ENCODE measurements at regions of chr11 and their contacts with region 1.

Region 1: GRCh38 chr11:102287964-102288724 is 29.1 kb upstream of the BIRC3 start:
- DNase-seq: peak in 3 of 9 experiments; percentile 34 to 85 (median 76)
- ATAC-seq: peak; percentile 89
- H3K4me3 ChIP-seq: no peak overlapping the region
- H3K4me3 Mint-ChIP-seq: peak overlapping the region; percentile 35
- H3K27ac ChIP-seq: no peak overlapping the region
- H3K27ac Mint-ChIP-seq: no peak overlapping the region
- H3K4me1 ChIP-seq: no peaks in the 10 kb centered on the region
- H3K4me1 Mint-ChIP-seq: peaks cover 12% of the 10 kb centered on the region
- H3K27me3 ChIP-seq: no peaks in the 10 kb centered on the region
- H3K27me3 Mint-ChIP-seq: no peaks in the 10 kb centered on the region
- CTCF ChIP-seq: peak; percentile 80

Region 2: DNA sequence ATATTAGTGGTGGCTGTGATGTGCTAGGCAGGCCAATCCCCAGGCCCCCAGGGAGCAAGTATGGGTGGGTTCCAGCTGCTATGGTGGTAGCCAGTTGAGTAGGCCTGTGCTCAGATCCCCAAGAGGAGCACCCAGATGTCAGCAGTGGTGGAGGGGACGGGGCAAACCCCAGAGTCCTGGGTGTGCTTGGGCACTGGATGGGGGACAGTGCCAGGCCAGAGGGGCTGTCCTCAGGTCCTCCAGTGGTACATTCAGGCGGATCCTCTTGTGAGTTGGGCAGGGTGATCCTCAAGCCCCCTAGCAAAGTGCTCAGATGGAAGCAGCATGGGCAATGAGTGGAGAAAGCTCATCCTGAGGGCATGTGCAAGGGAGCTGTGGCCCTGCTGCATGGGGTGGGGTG is 214.9 kb before region 1 on chr11:
- CTCF ChIA-PET with region 1: no interaction called
- POLR2A ChIA-PET with region 1: no interaction called
- intact Hi-C with region 1: no loop called
- DNase-seq: no peak
- ATAC-seq: no peak
- H3K4me3 ChIP-seq: no peak overlapping the region
- H3K4me3 Mint-ChIP-seq: no peak overlapping the region
- H3K27ac ChIP-seq: no peak overlapping the region
- H3K27ac Mint-ChIP-seq: no peak overlapping the region
- H3K4me1 ChIP-seq: no peaks in the 10 kb centered on the region
- H3K4me1 Mint-ChIP-seq: no peaks in the 10 kb centered on the region
- H3K27me3 ChIP-seq: no peaks in the 10 kb centered on the region
- H3K27me3 Mint-ChIP-seq: peaks cover 6% of the 10 kb centered on the region
- CTCF ChIP-seq: no peak

Region 3: GRCh38 chr11:102317099-102317767 is 29.1 kb after region 1 on chr11 and contains the start of gene BIRC3:
- CTCF ChIA-PET with region 1: interaction called, 384 read pairs
- POLR2A ChIA-PET with region 1: interaction called, 8 read pairs
- intact Hi-C with region 1: loop called in 1 of 2 experiments (anchors 1 kb)
- DNase-seq: peak; percentile 76 to 99 (median 88)
- ATAC-seq: peak; percentile 85
- H3K4me3 ChIP-seq: peak within 1 kb of the TSS; percentile 68 to 80
- H3K4me3 Mint-ChIP-seq: peak within 1 kb of the TSS; percentile 90
- H3K27ac ChIP-seq: peak within 1 kb of the TSS; percentile 82 to 95
- H3K27ac Mint-ChIP-seq: peak within 1 kb of the TSS; percentile 97
- H3K4me1 ChIP-seq: peaks cover 57% of the 10 kb centered on the region
- H3K4me1 Mint-ChIP-seq: peaks cover 79% of the 10 kb centered on the region
- H3K27me3 ChIP-seq: no peaks in the 10 kb centered on the region
- H3K27me3 Mint-ChIP-seq: no peaks in the 10 kb centered on the region
- CTCF ChIP-seq: no peak
- total RNA-seq, gene BIRC3: 88.0 to 90.4 TPM

Region 4: DNA sequence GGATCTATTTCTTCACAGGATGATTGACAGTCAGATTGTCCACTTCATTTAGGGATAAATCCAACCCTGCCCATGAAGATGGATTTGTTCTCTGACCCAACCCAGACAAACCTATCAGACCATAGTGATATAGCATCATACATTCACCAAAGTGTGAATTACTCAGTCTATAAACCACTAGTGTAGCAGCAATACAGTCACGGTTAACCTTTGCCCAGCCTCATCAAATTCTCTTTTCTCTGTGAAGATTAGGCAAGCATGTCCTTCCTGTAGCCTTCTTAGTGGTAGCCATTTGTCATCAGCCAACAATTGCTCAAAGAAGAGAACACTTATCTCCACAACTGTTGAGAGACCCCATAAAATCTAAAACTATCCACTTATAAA is 44.5 kb after region 1 on chr11:
- CTCF ChIA-PET with region 1: interaction called, 23 read pairs
- POLR2A ChIA-PET with region 1: no interaction called
- intact Hi-C with region 1: no loop called
- DNase-seq: no peak
- ATAC-seq: no peak
- H3K4me3 ChIP-seq: no peak overlapping the region
- H3K4me3 Mint-ChIP-seq: no peak overlapping the region
- H3K27ac ChIP-seq: no peak overlapping the region
- H3K27ac Mint-ChIP-seq: peak overlapping the region; percentile 47
- H3K4me1 ChIP-seq: no peaks in the 10 kb centered on the region
- H3K4me1 Mint-ChIP-seq: peaks cover 7% of the 10 kb centered on the region
- H3K27me3 ChIP-seq: no peaks in the 10 kb centered on the region
- H3K27me3 Mint-ChIP-seq: no peaks in the 10 kb centered on the region
- CTCF ChIP-seq: no peak

Region 5: DNA sequence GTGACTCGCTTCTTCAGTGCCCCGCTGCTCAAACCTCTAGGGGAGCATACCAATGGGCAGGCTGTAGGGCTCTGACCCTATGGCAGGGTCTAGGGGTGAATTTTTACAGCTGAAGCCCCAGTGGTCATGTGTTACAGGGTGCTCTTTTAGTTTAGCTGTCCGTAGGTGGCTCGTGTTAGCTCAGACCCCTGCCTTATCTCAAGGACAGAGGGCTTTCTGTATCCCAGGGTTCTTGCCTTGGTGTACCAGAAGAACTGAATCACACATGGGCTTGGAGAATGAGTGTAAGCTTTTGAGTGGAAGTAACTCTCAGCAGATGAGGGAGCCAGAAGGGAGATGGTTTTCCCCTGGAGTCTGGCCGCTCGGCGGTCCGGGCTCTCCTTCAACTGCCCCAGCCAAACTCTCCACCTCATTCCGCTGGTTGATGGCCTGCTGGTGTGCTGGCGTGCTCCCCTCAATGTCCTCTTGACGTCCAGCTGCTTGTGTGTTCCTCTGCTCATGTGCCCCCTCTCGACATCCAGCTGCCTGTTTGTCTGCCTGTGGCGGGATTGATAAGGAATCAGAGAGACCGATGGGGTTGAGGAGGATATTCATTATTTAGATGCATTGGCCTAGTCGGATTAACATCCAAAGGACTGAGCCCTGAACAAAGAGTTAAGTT is 96.4 kb after region 1 on chr11:
- CTCF ChIA-PET with region 1: interaction called, 3 read pairs
- POLR2A ChIA-PET with region 1: no interaction called
- intact Hi-C with region 1: loop called in 1 of 2 experiments (anchors 5 kb)
- DNase-seq: no peak
- ATAC-seq: no peak
- H3K4me3 ChIP-seq: no peak overlapping the region
- H3K4me3 Mint-ChIP-seq: no peak overlapping the region
- H3K27ac ChIP-seq: no peak overlapping the region
- H3K27ac Mint-ChIP-seq: no peak overlapping the region
- H3K4me1 ChIP-seq: peaks cover 7% of the 10 kb centered on the region
- H3K4me1 Mint-ChIP-seq: peaks cover 27% of the 10 kb centered on the region
- H3K27me3 ChIP-seq: no peaks in the 10 kb centered on the region
- H3K27me3 Mint-ChIP-seq: no peaks in the 10 kb centered on the region
- CTCF ChIP-seq: no peak

Region 6: GRCh38 chr11:102614485-102614884 is 326.3 kb after region 1 on chr11:
- CTCF ChIA-PET with region 1: interaction called, 15 read pairs
- POLR2A ChIA-PET with region 1: interaction called, 3 read pairs
- intact Hi-C with region 1: loop called (anchors 1 to 2 kb)
- DNase-seq: peak in 1 of 9 experiments; percentile 9
- ATAC-seq: no peak
- H3K4me3 ChIP-seq: no peak overlapping the region
- H3K4me3 Mint-ChIP-seq: no peak overlapping the region
- H3K27ac ChIP-seq: no peak overlapping the region
- H3K27ac Mint-ChIP-seq: no peak overlapping the region
- H3K4me1 ChIP-seq: no peaks in the 10 kb centered on the region
- H3K4me1 Mint-ChIP-seq: peaks cover 3% of the 10 kb centered on the region
- H3K27me3 ChIP-seq: no peaks in the 10 kb centered on the region
- H3K27me3 Mint-ChIP-seq: no peaks in the 10 kb centered on the region
- CTCF ChIP-seq: no peak

Region 7: GRCh38 chr11:102914238-102915043 is 626.3 kb after region 1 on chr11:
- CTCF ChIA-PET with region 1: no interaction called
- POLR2A ChIA-PET with region 1: no interaction called
- intact Hi-C with region 1: no loop called
- DNase-seq: no peak
- ATAC-seq: no peak
- H3K4me3 ChIP-seq: no peak overlapping the region
- H3K4me3 Mint-ChIP-seq: no peak overlapping the region
- H3K27ac ChIP-seq: no peak overlapping the region
- H3K27ac Mint-ChIP-seq: no peak overlapping the region
- H3K4me1 ChIP-seq: no peaks in the 10 kb centered on the region
- H3K4me1 Mint-ChIP-seq: no peaks in the 10 kb centered on the region
- H3K27me3 ChIP-seq: no peaks in the 10 kb centered on the region
- H3K27me3 Mint-ChIP-seq: peaks cover 3% of the 10 kb centered on the region
- CTCF ChIP-seq: no peak

Region 8: GRCh38 chr11:102940714-102941588 is 652.8 kb after region 1 on chr11:
- CTCF ChIA-PET with region 1: interaction called, 3 read pairs
- POLR2A ChIA-PET with region 1: no interaction called
- intact Hi-C with region 1: loop called in 1 of 2 experiments (anchors 5 kb)
- DNase-seq: peak in 5 of 9 experiments; percentile 8 to 56 (median 21)
- ATAC-seq: no peak
- H3K4me3 ChIP-seq: no peak overlapping the region
- H3K4me3 Mint-ChIP-seq: no peak overlapping the region
- H3K27ac ChIP-seq: no peak overlapping the region
- H3K27ac Mint-ChIP-seq: no peak overlapping the region
- H3K4me1 ChIP-seq: no peaks in the 10 kb centered on the region
- H3K4me1 Mint-ChIP-seq: peaks cover 2% of the 10 kb centered on the region
- H3K27me3 ChIP-seq: no peaks in the 10 kb centered on the region
- H3K27me3 Mint-ChIP-seq: peaks cover 11% of the 10 kb centered on the region
- CTCF ChIP-seq: peak; percentile 69